Activated CD4-positive, alpha-beta T cell treated with anti-CD3 and anti-CD28 coated beads for 36 hours (primary cell): ENCODE measurements at regions of chr1 and their contacts with region 1.

Region 1: DNA sequence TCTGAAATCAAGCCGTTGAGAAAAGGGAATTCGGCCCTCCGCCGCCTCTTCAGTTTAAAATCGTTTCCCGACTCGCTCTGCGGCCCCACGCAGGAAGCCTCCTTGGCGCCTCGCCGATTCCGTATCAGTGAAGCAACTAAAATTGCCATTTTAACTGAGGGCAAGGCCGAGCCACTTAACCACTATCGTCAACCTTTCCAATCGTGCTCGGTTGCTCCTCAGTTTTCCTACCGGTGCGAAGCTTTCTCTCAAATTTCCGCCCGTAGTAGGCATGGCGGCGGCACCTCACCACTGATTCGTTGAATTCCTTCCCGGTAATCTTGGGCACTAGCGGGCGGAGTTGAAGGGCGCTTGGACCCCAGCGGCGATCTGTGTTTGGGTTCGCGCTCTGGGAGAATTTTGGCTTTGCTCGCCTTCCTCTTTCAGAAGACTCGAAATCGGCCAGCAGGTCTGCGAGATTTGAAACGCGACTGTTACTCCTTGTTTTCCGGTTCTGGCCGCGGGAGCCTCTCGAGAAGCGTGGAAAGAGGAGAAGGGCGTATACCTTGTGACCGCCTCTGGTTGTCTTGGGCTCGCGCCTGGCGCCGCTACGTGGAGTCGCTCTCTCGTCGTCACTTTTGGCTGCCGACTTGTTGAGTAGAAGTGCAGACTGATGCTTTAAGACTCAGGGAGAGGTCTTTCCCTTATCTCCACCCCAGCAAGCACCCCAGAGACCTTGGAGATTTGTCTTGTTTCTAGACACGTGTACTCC is at the starts of genes CENPL and DARS2:
- DNase-seq: peak; percentile 94
- ATAC-seq: peak; percentile 86
- H3K4me3 Mint-ChIP-seq: peak within 1 kb of the TSS; percentile 94
- H3K27ac Mint-ChIP-seq: peak within 1 kb of the TSS; percentile 99
- H3K4me1 Mint-ChIP-seq: peaks cover 55% of the 10 kb centered on the region
- H3K27me3 Mint-ChIP-seq: no peaks in the 10 kb centered on the region
- total RNA-seq, gene CENPL: 26.1 to 27.2 TPM
- total RNA-seq, gene DARS2: 57.2 to 62.0 TPM

Region 2: GRCh38 chr1:173420330-173420806 is 404.1 kb before region 1 on chr1:
- CTCF ChIA-PET with region 1: no interaction called
- POLR2A ChIA-PET with region 1: no interaction called
- intact Hi-C with region 1: loop called in 1 of 2 experiments (anchors 1 kb)
- DNase-seq: peak; percentile 69
- ATAC-seq: peak; percentile 91
- H3K4me3 Mint-ChIP-seq: no peak overlapping the region
- H3K27ac Mint-ChIP-seq: no peak overlapping the region
- H3K4me1 Mint-ChIP-seq: peaks cover 3% of the 10 kb centered on the region
- H3K27me3 Mint-ChIP-seq: no peaks in the 10 kb centered on the region

Region 3: DNA sequence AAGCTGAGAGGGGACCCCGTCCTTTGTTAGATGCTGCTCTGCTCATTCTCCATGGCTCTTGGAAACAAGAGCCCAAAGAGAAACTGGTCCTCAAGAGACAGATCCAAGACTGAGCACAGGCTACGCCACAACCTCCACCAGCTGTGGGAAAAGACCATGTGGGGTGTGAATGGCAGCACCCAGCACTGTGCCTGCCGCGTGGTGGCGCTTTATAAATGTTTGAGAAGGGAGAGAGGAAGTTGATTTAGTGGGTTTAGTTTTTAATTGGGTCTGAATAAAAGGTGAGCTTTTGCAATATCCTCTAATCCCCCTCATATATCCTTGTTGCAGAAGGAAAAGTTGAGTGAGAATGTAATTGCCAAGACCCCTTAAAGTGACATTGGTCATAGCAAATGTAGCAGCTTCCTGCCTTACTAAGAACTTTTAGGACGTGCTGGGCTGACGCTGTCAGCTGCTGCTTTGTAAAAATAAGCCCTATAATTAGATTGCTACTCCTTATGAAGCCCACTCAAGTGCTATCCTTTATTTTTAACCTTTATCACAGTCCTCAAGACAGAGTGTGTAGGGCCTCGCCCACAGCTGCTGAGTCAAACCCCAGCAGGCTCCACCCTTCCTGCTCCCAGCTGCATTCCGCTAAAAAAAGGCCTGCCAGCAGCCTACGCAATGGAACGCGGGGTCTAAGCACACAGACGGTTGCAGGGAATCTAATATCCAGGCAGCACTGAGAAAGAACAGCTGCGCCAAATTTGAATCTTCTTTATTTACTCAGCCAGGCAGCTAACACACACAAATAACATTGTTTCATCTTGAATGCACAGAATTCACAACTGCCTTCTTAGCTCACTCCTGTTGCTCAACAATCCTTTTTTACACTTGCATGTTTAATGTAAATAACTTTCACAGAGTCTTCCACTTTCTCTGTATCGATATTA is 394.8 kb before region 1 on chr1:
- CTCF ChIA-PET with region 1: interaction called, 17 read pairs
- POLR2A ChIA-PET with region 1: interaction called, 6 read pairs
- intact Hi-C with region 1: loop called (anchors 1 kb)
- DNase-seq: peak; percentile 86
- ATAC-seq: peak; percentile 87
- H3K4me3 Mint-ChIP-seq: peak overlapping the region; percentile 52
- H3K27ac Mint-ChIP-seq: peak overlapping the region; percentile 79
- H3K4me1 Mint-ChIP-seq: peaks cover 25% of the 10 kb centered on the region
- H3K27me3 Mint-ChIP-seq: no peaks in the 10 kb centered on the region

Region 4: DNA sequence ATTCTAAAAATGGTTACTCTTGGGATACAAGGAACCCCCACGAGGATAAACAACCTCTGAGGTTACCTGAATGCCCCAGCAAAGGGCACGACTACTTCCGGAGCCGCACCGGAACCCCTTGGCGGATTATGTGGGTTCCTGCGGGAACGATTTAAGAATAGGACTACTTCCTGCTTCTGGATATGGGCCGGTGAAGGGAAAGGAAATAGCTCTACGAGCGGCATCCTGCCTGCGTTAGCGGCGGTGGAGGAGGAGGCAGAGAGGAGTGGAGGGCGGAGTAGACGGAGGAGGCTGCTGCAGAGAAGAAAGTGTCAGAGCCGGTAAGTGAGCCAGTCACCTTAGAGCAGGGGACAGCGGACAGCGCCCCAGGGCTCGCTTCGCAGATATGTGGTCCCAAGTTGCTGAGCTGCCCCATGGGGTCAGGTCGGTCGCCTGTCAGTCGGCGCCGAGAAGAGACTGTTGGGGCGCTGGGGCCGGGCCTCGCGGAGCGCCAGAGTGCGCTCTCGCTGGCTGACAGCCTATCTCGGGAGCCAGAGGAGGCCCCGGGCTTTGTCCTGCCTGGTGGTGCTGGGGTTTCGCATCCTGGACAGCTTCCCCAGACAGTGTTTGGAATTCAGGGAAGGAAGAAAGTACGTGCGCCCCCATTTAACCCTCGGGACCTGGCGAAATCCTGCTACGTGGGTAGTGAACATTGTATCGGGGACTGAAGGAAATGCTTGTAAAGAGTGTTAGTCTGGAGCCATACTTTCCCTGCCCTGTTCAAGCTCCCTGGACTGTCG is 109.6 kb before region 1 on chr1 and contains the start of gene KLHL20:
- CTCF ChIA-PET with region 1: interaction called, 3 read pairs
- POLR2A ChIA-PET with region 1: interaction called, 15 read pairs
- intact Hi-C with region 1: loop called (anchors 1 kb)
- DNase-seq: peak; percentile 90
- ATAC-seq: peak; percentile 99
- H3K4me3 Mint-ChIP-seq: peak within 1 kb of the TSS; percentile 86
- H3K27ac Mint-ChIP-seq: peak within 1 kb of the TSS; percentile 88
- H3K4me1 Mint-ChIP-seq: peaks cover 24% of the 10 kb centered on the region
- H3K27me3 Mint-ChIP-seq: peaks cover 11% of the 10 kb centered on the region
- total RNA-seq, gene KLHL20: 11.1 to 14.1 TPM

Region 5: GRCh38 chr1:173768206-173768605 is 56.3 kb before region 1 on chr1:
- CTCF ChIA-PET with region 1: no interaction called
- POLR2A ChIA-PET with region 1: no interaction called
- intact Hi-C with region 1: no loop called
- DNase-seq: no peak
- ATAC-seq: no peak
- H3K4me3 Mint-ChIP-seq: no peak overlapping the region
- H3K27ac Mint-ChIP-seq: no peak overlapping the region
- H3K4me1 Mint-ChIP-seq: peaks cover 11% of the 10 kb centered on the region
- H3K27me3 Mint-ChIP-seq: no peaks in the 10 kb centered on the region

Region 6: DNA sequence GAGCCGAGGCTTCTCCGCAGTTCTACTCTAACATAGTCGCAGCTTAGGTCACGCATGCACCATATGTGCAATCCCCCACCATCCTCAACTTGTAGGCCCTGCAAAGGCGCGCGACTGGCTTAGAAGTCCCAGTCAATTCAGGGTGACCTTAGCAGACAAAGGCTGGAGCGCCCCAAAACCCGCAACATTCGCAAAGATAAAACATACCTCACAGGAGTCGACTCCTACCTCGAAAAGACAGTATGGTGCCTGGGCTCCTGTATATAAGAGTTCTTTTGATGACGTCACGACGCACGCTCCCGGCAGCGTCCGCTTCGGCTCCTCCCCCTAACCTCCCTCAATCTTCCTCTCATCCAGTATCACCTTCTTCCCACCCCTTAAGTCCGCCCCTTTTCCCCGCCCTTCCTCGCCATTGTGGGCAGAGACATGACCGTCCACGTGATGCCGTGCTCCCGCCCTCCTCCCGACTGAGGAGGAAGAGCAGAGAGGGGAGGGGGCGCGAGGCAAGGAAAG is 43.3 kb after region 1 on chr1 and contains the start of gene GAS5:
- CTCF ChIA-PET with region 1: interaction called, 4 read pairs
- POLR2A ChIA-PET with region 1: interaction called, 14 read pairs
- intact Hi-C with region 1: loop called (anchors 1 kb)
- DNase-seq: peak; percentile 100
- ATAC-seq: peak; percentile 82
- H3K4me3 Mint-ChIP-seq: peak within 1 kb of the TSS; percentile 91
- H3K27ac Mint-ChIP-seq: peak within 1 kb of the TSS; percentile 97
- H3K4me1 Mint-ChIP-seq: peaks cover 57% of the 10 kb centered on the region
- H3K27me3 Mint-ChIP-seq: no peaks in the 10 kb centered on the region
- total RNA-seq, gene GAS5: 878 to 1,203 TPM

Region 7: GRCh38 chr1:173914366-173914871 is 89.9 kb after region 1 on chr1:
- CTCF ChIA-PET with region 1: no interaction called
- POLR2A ChIA-PET with region 1: no interaction called
- intact Hi-C with region 1: no loop called
- DNase-seq: peak; percentile 55
- ATAC-seq: no peak
- H3K4me3 Mint-ChIP-seq: no peak overlapping the region
- H3K27ac Mint-ChIP-seq: no peak overlapping the region
- H3K4me1 Mint-ChIP-seq: no peaks in the 10 kb centered on the region
- H3K27me3 Mint-ChIP-seq: no peaks in the 10 kb centered on the region

Region 8: DNA sequence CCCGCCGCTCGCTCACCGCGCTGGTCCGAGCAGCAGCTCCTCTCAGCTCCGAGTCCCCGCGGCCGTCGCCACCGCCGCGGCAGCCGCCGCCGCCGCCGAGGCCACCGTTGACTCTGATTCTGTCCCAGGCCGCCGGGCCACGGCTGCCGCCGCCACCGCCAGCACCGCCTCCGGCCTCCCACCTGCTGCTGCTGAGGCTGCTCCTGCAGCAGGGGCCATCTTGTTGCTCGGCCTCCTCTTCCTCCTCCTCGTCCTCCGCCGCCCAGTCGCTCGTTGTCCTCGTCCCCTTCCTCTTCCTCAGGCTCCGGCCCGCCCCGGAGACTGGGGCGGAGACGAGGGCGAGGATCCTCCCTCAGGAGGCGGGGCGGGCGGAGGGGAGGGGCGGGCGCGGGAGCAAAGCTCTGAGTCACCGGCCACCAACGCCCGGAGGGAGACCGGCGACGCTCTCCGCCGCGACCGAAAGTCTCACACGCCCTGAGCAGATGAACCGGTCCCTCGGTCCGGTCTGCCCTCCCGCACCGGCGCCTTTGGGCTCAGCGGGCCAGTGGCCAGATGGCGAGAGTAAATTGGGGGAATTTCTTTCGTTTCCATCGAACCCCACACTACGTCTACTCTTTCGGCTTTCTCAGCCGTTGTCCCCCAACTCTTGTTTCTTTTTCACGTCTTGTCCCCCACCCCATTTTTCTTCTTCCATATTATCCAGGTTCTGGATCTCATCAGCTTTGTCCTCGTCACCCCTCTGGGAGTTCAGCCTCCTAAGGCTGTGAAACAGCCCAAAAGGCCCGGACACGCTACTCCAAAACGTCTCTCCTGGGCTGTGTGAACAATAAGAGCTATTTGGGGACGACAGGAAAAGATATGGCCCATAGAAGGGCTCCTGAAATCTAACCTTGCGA is 197.8 kb after region 1 on chr1 and contains the start of gene RC3H1:
- CTCF ChIA-PET with region 1: interaction called, 3 read pairs
- POLR2A ChIA-PET with region 1: no interaction called
- intact Hi-C with region 1: loop called in 1 of 2 experiments (anchors 1 kb)
- DNase-seq: peak; percentile 96
- ATAC-seq: peak; percentile 91
- H3K4me3 Mint-ChIP-seq: peak within 1 kb of the TSS; percentile 87
- H3K27ac Mint-ChIP-seq: peak within 1 kb of the TSS; percentile 96
- H3K4me1 Mint-ChIP-seq: peaks cover 31% of the 10 kb centered on the region
- H3K27me3 Mint-ChIP-seq: no peaks in the 10 kb centered on the region
- total RNA-seq, gene RC3H1: 27.3 to 37.0 TPM

Region 9: DNA sequence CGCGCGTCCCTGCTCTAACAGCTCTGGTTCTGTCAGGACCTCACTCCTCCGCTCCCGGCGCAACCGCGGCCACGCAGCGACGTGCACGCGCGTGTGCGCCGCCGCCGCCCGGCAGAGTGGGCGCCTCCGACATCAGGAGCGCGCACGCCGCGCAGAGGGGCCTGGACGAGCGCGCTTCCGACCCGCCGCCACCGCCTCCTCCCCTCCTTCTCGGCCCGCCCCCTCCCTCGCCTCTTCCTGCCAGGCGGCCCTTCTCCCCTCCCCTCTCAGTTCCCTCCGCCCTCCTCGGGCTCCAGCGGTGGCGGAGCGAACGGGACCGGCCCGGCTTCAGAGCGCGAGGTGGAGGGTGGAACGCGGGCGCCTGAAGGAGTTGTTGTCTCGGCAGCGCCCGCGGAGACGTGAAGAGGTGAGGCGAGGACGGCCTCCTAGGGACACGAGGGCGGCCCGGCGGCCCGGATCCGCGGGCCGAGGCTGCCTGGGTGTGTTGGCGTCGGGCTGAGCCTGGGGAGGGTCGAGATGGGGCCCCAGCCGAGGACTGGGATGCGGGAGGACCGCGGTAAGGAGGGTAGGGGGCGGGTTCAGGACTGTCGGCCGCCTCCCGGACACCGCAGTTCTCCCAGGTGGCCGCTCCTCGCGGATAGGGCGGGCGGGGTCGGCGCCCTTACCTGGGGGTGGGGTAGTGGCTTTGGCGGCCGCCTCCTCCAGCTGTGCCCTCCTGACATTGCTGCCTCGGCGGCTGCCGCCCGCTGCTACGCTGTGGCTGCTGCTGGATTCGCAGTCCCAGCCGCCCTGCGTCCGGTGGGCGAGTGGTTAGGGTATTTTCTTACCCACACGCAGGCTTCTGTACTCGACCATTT is 335.0 kb after region 1 on chr1 and contains the start of gene RABGAP1L:
- CTCF ChIA-PET with region 1: no interaction called
- POLR2A ChIA-PET with region 1: no interaction called
- intact Hi-C with region 1: loop called in 1 of 2 experiments (anchors 2 kb)
- DNase-seq: peak; percentile 97
- ATAC-seq: peak; percentile 83
- H3K4me3 Mint-ChIP-seq: peak within 1 kb of the TSS; percentile 93
- H3K27ac Mint-ChIP-seq: peak within 1 kb of the TSS; percentile 95
- H3K4me1 Mint-ChIP-seq: peaks cover 59% of the 10 kb centered on the region
- H3K27me3 Mint-ChIP-seq: no peaks in the 10 kb centered on the region
- total RNA-seq, gene RABGAP1L: 22.6 to 29.9 TPM